Activated CD4-positive, alpha-beta T cell treated with anti-CD3 and anti-CD28 coated beads for 36 hours (primary cell): ENCODE measurements at regions of chr20 and their contacts with region 1.

Region 1: DNA sequence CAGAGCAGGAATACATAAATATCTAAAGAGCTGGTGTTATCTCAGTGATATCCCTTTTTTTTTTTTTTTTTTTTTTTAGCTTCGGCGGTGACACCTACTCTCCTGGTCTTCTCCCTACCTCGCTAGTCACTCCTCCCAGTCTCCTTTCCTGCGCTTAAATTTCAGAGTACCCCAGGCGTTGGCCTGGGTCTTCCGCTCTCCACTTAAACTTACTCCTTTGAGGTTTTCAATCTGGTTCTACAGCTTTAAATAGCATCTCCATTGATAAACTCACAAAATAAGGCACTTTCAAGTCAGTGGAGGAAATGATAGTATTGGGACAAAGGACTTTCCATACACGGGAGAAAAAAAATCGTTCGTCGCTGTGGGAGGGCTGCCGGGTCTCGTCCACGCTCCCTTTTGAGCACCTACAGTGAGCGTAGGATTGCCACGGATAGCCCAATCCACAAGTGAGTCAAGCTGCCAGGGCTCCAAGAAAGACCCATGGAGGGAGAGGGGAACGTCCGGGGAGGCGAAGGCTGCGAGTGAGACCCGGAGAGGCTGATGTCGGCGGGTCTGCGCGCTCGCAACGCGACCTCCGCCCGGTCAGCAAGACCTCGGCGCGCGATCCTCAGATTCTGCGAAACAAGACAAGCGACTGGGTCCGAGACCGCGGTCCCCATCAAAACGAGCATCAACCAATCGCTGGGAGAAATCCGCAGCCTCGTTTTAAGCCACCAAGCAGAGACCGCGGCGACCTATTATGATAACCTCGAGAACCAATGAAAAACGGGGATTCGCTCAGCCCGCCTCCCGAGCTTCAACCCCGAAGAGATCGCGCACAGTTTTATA is 672 bp upstream of the SRSF6 start:
- DNase-seq: peak; percentile 92
- ATAC-seq: peak; percentile 86
- H3K4me3 Mint-ChIP-seq: peak overlapping the region; percentile 91
- H3K27ac Mint-ChIP-seq: peak overlapping the region; percentile 99
- H3K4me1 Mint-ChIP-seq: peaks cover 30% of the 10 kb centered on the region
- H3K27me3 Mint-ChIP-seq: peaks cover 2% of the 10 kb centered on the region

Region 2: DNA sequence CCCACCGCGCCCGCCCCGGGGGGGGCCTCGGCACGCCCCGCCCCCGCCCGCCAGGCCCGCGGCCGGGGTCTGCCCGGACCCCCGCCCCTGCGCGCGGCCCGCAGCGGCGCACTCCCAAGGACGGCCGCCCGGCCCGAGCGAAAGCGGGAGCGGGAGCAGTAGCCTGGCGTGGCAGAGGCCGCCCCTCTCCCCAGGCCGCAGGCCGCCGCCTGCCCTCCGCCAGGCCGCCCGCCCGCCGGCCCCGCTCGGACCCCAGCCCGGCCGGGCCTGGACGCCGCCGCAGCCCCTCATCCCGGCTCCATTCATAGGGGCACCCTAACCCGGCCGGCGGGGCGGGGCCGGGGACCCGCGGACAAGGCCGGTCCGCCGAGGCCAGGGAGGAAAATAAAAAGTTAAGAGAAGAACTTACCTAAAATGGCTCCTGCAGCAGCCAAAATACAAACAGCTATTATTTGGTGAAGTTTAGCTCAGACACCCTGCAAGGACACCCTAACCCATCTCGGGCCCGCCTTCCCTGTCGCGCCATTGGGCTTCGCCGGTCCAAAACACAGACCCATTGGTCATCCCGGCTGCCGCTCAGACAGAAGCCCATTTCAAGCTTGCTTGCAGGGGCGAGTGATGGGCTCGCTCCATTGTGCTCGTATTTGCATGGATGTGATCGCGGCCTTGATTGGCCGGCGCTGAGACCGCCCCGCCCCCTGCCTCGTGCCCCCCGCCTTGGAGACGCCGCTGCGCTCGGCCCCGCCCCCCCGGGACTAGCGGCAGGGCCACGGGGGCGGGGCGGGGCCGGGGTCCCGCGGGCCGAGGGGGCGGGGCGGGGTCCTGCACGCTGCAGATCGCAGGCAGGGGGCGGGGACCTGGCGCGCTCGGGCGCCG is 1838.9 kb before region 1 on chr20 and contains the start of gene CHD6:
- CTCF ChIA-PET with region 1: no interaction called
- POLR2A ChIA-PET with region 1: no interaction called
- intact Hi-C with region 1: loop called in 1 of 2 experiments (anchors 5 kb)
- DNase-seq: peak; percentile 99
- ATAC-seq: peak; percentile 99
- H3K4me3 Mint-ChIP-seq: peak within 1 kb of the TSS; percentile 75
- H3K27ac Mint-ChIP-seq: peak within 1 kb of the TSS; percentile 75
- H3K4me1 Mint-ChIP-seq: peaks cover 42% of the 10 kb centered on the region
- H3K27me3 Mint-ChIP-seq: no peaks in the 10 kb centered on the region
- total RNA-seq, gene CHD6: 30.2 to 34.0 TPM

Region 3: DNA sequence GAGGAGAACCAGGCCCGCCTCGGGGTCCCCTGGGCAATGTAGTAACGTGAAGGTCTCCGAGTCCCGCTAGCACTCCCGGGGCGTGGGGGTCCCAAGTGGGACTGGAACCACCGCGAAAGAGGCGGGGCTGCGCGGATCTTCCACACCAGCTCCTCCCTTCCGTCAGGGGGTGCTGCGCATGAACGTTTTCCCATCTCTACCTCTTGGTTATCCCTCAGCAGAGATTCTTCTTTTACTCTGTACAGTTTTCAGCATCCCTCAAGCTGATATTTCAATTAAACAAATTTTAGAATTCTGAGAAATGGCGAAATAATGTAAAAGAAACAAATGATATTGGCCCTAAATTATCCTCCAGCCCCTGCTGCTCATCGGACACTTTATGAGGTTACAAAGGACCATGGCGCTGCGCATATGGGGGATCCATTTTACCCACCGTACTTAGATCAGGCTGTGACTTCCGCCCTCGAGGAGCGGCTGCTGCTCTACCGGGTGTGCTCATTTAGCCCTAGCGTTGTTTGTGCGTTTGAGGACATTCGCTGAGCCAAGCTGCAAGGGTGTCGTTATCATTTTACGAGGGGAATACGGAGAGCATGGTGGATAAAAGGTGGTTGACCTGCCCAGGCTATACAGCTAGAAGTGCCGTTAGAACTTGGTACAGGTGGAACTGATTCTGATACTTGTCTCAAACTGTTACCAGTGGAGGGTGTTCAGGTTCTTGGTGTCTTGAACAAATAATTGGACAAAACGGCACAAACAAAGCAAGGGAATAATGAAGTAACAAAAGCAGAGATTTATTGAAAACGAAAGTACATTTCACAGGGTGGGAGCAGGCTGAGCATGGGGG is 1763.7 kb before region 1 on chr20:
- CTCF ChIA-PET with region 1: no interaction called
- POLR2A ChIA-PET with region 1: interaction called, 4 read pairs
- intact Hi-C with region 1: loop called in 1 of 2 experiments (anchors 1 kb)
- DNase-seq: peak; percentile 88
- ATAC-seq: peak; percentile 90
- H3K4me3 Mint-ChIP-seq: peak overlapping the region; percentile 90
- H3K27ac Mint-ChIP-seq: peak overlapping the region; percentile 94
- H3K4me1 Mint-ChIP-seq: peaks cover 13% of the 10 kb centered on the region
- H3K27me3 Mint-ChIP-seq: peaks cover 2% of the 10 kb centered on the region

Region 4: DNA sequence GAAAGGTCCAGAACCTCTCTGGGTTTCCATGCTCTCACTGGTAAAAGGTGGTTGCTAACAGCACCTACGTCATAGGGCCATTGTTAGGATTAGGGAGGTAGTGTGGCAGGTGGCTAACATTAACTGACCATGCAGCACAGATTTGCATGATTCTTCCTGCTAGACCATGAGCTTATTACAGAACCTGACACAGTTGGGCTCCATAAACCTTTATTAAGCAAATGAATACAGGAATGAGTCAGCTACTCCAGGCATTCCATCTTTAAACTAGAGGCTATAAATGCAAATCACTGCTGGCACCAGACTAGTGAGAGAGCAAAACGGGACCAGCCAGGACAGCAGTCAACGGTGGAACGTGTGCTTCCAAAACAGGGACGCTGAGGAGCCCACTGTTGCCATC is 707.5 kb before region 1 on chr20:
- CTCF ChIA-PET with region 1: no interaction called
- POLR2A ChIA-PET with region 1: no interaction called
- intact Hi-C with region 1: no loop called
- DNase-seq: no peak
- ATAC-seq: no peak
- H3K4me3 Mint-ChIP-seq: no peak overlapping the region
- H3K27ac Mint-ChIP-seq: no peak overlapping the region
- H3K4me1 Mint-ChIP-seq: no peaks in the 10 kb centered on the region
- H3K27me3 Mint-ChIP-seq: no peaks in the 10 kb centered on the region

Region 5: GRCh38 chr20:43263226-43263625 is 193.8 kb before region 1 on chr20:
- CTCF ChIA-PET with region 1: no interaction called
- POLR2A ChIA-PET with region 1: no interaction called
- intact Hi-C with region 1: no loop called
- DNase-seq: no peak
- ATAC-seq: no peak
- H3K4me3 Mint-ChIP-seq: no peak overlapping the region
- H3K27ac Mint-ChIP-seq: no peak overlapping the region
- H3K4me1 Mint-ChIP-seq: no peaks in the 10 kb centered on the region
- H3K27me3 Mint-ChIP-seq: peaks cover 6% of the 10 kb centered on the region

Region 6: DNA sequence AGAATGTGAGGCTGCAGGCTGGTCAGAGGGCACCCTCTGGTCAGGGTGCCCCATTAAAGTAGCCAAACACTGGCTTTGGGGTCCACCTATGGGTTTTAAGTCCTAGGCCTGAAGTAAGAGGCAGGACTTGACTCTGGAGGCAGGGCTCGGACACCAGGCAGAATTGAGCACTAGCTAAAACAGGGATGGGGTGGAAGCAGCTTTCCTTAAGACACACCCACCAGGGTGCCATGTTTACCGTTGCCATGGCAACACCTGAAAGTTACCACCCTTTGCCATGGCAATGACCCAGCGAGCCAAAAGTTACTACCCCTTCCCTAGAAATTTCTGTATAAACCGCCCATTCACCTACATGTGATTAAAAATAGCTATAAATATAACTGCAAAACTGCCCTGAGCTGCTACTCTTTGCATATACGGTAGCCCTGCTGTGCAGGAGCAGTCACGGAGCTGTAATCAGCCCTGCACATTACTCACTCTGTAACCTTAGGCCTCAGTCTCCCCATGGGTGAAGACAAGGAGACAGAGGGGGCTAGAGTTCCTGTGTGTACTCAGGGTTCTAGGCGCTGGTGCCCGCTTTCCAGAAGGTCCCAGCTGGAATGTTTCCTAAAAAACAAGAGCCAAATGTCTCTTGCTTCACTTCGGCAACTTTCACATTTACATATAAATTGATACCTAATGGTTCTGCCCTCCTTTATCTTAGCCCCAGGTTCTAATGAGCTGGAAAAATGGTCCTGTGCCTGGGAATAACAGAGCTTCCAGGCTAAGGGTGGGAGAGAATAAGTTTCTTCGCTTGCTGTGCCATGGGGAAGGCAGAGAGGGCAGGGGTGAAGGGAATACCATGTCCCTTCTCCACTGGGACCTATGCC is 26.5 kb before region 1 on chr20:
- CTCF ChIA-PET with region 1: no interaction called
- POLR2A ChIA-PET with region 1: no interaction called
- intact Hi-C with region 1: no loop called
- DNase-seq: no peak
- ATAC-seq: no peak
- H3K4me3 Mint-ChIP-seq: no peak overlapping the region
- H3K27ac Mint-ChIP-seq: no peak overlapping the region
- H3K4me1 Mint-ChIP-seq: no peaks in the 10 kb centered on the region
- H3K27me3 Mint-ChIP-seq: peaks cover 30% of the 10 kb centered on the region

Region 7: DNA sequence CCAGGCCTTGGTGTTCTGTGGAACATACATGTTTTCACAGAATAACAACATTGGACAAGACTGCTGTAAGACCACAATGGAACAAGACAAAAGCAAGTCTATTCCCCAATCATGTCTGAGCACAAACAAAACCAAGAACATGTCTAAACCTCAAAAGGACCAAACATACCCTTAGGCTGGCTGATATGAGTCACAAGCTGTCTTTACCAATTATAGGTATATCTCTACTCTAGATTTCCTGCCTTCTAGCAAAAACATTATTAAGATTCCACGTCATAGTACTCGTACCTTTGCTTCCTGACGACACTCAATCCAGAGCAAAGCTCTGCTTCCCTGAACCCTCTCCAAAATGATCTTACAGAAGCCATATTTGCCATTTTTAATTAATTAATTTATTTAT is 35.1 kb after region 1 on chr20:
- CTCF ChIA-PET with region 1: interaction called, 4 read pairs
- POLR2A ChIA-PET with region 1: interaction called, 3 read pairs
- intact Hi-C with region 1: loop called in 1 of 2 experiments (anchors 1 kb)
- DNase-seq: no peak
- ATAC-seq: peak; percentile 96
- H3K4me3 Mint-ChIP-seq: no peak overlapping the region
- H3K27ac Mint-ChIP-seq: no peak overlapping the region
- H3K4me1 Mint-ChIP-seq: peaks cover 3% of the 10 kb centered on the region
- H3K27me3 Mint-ChIP-seq: peaks cover 4% of the 10 kb centered on the region

Region 8: DNA sequence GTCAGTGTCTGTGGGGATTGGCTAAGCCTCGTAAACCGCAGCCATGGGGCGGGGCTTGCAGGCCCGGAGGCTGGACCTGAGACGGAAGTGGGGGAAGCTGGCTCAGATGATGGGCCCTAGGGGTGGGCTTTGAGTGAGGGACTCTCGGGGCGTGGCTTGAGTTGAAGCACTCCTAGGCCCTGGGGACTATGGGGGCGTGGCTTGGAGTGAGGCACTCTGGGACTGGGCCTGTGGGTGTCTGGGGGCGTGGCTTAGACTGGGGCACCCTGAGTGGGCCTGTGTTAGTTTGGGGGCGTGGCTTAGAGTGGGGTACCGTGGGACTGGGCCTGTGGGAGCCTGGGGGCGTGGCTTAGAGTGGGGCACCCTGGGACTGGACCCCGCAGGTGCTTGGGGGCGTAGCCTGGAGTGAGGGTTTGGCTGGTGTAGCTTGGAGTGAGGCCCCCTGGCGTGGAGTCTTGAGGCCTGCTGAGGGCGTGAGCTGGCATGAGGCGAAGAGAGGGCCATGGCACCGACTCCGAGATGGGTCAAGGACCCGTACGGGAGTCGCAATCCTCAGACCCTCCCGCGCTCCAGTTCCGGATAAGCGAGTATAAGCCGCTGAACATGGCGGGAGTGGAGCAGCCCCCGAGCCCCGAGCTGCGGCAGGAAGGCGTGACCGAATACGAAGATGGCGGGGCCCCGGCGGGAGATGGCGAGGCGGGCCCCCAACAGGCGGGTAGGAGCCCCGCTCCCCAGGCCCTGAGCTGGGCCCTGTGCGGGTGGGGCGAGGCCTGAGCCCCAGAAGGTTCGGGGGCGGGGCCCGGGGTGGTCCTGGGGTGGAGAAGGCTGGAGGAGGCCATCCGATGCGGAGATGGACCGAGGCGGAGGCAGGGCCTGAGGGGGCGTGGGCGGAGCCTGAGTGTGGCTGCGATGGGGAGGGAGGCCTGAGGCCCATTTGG is 57.3 kb after region 1 on chr20:
- CTCF ChIA-PET with region 1: interaction called, 4 read pairs
- POLR2A ChIA-PET with region 1: interaction called, 9 read pairs
- intact Hi-C with region 1: loop called (anchors 1 kb)
- DNase-seq: peak; percentile 96
- ATAC-seq: peak; percentile 93
- H3K4me3 Mint-ChIP-seq: peak overlapping the region; percentile 90
- H3K27ac Mint-ChIP-seq: peak overlapping the region; percentile 86
- H3K4me1 Mint-ChIP-seq: peaks cover 7% of the 10 kb centered on the region
- H3K27me3 Mint-ChIP-seq: peaks cover 3% of the 10 kb centered on the region

Region 9: DNA sequence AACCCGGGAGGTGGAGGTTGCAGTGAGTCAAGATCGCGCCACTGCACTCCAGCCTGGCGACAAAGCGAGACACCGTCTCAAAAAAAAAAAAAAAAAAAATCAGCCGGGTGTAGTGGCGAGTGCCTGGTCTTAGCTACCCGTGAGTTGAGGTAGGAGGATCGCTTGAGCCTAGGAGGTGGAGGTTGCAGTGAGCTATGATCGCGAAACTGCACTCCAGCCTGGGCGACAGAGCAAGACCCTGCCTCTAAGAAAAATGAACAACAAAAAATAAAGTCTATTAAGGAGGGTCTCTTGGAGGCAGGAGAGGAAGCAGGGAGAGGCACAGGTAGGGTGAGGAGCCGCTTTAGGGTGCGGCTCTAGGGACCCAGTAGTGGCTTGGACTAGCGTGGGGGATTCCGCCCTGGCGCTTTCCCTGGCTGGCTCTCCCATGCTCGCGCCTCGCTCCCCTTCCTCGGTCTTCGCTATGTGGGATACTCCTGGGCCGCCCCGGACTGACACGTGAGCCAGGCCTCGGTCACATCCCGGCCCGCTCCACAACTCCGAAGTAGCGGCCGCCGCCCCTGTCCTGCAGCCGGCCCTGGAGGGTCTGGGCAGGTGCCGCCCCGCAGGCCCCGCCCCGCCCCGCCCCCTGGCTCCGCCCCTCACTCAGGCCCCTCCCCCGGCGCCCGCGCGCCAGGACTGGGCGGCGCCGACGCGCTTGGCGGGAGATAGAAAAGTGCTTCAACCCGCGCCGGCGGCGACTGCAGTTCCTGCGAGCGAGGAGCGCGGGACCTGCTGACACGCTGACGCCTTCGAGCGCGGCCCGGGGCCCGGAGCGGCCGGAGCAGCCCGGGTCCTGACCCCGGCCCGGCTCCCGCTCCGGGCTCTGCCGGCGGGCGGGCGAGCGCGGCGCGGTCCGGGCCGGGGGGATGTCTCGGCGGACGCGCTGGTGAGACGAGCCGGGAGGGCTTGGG is 209.6 kb after region 1 on chr20 and contains the start of gene MYBL2:
- CTCF ChIA-PET with region 1: interaction called, 3 read pairs
- POLR2A ChIA-PET with region 1: interaction called, 5 read pairs
- intact Hi-C with region 1: loop called in 1 of 2 experiments (anchors 1 kb)
- DNase-seq: peak; percentile 86
- ATAC-seq: peak; percentile 95
- H3K4me3 Mint-ChIP-seq: peak within 1 kb of the TSS; percentile 83
- H3K27ac Mint-ChIP-seq: peak within 1 kb of the TSS; percentile 58
- H3K4me1 Mint-ChIP-seq: peaks cover 2% of the 10 kb centered on the region
- H3K27me3 Mint-ChIP-seq: peaks cover 11% of the 10 kb centered on the region
- total RNA-seq, gene MYBL2: 99.8 to 113 TPM